ENCODE measurements at regions of chr16 and their contacts with region 1.

Region 1: GRCh38 chr16:12067714-12068401 is 91.3 kb downstream of the SNX29 start:
- DNase-seq: peak; percentile 80
- H3K4me3 Mint-ChIP-seq: no peak overlapping the region
- H3K27ac Mint-ChIP-seq: no peak overlapping the region
- H3K4me1 Mint-ChIP-seq: peaks cover 1% of the 10 kb centered on the region
- H3K27me3 Mint-ChIP-seq: no peaks in the 10 kb centered on the region
- CTCF ChIP-seq: peak; percentile 90

Region 2: DNA sequence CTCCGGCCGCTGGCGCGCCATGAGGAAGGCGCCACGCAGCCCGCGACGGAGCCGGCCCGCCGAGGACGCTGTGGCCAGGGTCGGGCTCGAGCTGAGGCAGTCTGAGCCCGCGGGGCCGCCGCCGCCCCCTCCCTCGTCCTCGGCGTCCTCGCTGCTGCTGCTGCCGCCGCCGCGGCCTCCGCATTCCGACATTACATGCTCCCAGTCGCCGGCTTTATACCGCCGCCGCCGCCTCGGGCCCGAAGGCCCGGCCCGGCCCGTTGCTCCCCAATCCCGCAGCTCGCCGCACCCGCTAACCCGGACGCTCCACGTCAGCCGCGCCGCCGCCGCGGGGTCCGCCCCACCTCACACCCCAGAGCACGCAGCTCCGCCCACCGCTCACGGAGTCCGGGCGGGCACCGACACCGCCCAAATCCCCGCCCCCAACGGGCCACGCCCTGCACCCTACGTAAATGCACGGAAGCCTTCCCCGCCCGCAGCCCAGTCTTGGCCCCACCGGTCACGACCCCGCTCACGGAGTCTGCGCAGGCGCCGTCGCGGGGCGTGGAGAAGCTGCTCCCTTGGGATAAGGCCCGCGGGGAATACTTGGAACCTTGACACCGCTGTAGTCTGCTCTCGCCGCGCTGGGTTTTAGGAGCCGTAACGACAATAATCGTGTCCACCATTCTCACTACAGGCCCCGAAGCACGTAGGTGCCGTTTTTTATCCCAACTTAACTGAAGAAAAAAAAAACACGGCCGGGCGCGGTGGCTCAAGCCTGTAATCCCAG is 325.1 kb before region 1 on chr16 and contains the start of gene TXNDC11:
- CTCF ChIA-PET with region 1: interaction called, 4 read pairs
- POLR2A ChIA-PET with region 1: interaction called, 5 read pairs
- intact Hi-C with region 1: loop called (anchors 5 kb)
- DNase-seq: peak; percentile 97
- H3K4me3 Mint-ChIP-seq: peak within 1 kb of the TSS; percentile 86
- H3K27ac Mint-ChIP-seq: peak within 1 kb of the TSS; percentile 94
- H3K4me1 Mint-ChIP-seq: peaks cover 31% of the 10 kb centered on the region
- H3K27me3 Mint-ChIP-seq: no peaks in the 10 kb centered on the region
- CTCF ChIP-seq: no peak
- total RNA-seq, gene TXNDC11: 38.2 and 43.7 TPM in 2 replicates

Region 3: DNA sequence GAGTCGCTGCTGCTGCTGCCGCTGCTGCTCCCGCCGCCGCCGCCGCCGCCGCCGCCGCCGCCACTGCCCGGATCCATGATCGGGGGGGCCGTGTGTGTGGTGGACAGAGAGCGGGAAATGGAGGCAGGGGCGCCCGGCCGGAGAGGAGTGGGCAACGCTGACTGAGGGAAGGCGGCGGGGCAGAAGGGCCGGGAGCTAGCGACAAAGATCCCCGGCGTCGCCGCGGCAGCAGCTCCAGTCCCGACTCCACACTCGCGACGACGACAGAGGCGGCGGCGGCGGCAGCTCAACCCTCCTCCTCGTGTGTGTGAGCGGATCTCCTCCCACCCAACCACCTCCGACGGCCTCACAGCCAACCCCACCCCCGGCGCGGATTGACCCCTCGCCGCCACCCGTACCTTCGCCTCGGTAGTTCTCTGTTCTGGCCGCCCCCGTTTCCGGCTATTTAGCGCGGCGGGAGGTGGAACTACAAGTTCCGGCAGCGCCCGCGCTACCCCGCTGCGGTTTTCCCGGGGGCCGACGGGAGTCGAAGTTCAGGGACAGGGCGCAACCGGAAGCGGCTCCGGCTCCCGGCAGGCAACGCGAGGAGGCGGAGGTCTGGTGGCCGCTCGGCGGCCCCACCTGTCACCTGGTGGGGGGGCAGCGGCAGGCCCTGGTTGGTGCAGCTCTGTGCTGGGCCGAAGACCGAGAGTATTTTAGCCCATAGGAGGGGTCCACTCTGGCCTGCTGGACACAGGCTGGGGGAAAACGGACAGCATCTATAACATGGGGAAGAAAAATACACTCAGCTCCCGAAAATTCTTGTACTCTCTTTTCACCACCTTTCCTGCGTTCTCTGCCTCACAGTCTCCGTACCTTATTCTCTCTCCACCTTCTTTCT is 152.0 kb before region 1 on chr16 and contains the start of gene GSPT1:
- CTCF ChIA-PET with region 1: interaction called, 4 read pairs
- POLR2A ChIA-PET with region 1: interaction called, 43 read pairs
- intact Hi-C with region 1: loop called (anchors 5 kb)
- DNase-seq: peak; percentile 98
- H3K4me3 Mint-ChIP-seq: peak within 1 kb of the TSS; percentile 88
- H3K27ac Mint-ChIP-seq: peak within 1 kb of the TSS; percentile 71
- H3K4me1 Mint-ChIP-seq: peaks cover 15% of the 10 kb centered on the region
- H3K27me3 Mint-ChIP-seq: no peaks in the 10 kb centered on the region
- CTCF ChIP-seq: no peak
- total RNA-seq, gene GSPT1: 163 and 199 TPM in 2 replicates

Region 4: GRCh38 chr16:11957591-11958395 is 110.1 kb before region 1 on chr16:
- CTCF ChIA-PET with region 1: interaction called, 12 read pairs
- POLR2A ChIA-PET with region 1: no interaction called
- intact Hi-C with region 1: no loop called
- DNase-seq: no peak
- H3K4me3 Mint-ChIP-seq: no peak overlapping the region
- H3K27ac Mint-ChIP-seq: no peak overlapping the region
- H3K4me1 Mint-ChIP-seq: peaks cover 6% of the 10 kb centered on the region
- H3K27me3 Mint-ChIP-seq: no peaks in the 10 kb centered on the region
- CTCF ChIP-seq: no peak

Region 5: DNA sequence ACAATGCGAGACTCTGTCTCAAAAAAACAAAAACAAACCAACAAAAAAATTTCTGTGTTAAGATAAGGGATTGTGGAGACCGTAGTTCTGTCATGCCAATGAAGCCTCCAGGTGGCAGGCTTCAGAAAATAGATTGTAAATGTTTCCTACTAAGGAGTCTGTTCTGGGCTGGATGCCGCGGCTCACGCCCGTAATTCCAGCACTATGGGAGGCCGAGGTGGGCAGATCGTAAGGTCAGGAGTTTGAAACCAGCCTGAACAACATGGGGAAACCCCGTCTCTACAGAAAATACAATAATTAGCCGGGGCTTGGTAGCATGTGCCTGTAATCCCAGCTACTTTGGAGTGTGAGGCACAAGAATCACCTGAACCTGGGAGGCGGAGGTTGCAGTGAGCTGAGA is 95.7 kb before region 1 on chr16:
- CTCF ChIA-PET with region 1: interaction called, 44 read pairs
- POLR2A ChIA-PET with region 1: interaction called, 41 read pairs
- intact Hi-C with region 1: loop called (anchors 1 kb)
- DNase-seq: peak; percentile 9
- H3K4me3 Mint-ChIP-seq: no peak overlapping the region
- H3K27ac Mint-ChIP-seq: no peak overlapping the region
- H3K4me1 Mint-ChIP-seq: peaks cover 15% of the 10 kb centered on the region
- H3K27me3 Mint-ChIP-seq: no peaks in the 10 kb centered on the region
- CTCF ChIP-seq: no peak

Region 6: GRCh38 chr16:12079412-12079965 is 11.6 kb after region 1 on chr16:
- CTCF ChIA-PET with region 1: interaction called, 15 read pairs
- POLR2A ChIA-PET with region 1: no interaction called
- intact Hi-C with region 1: no loop called
- DNase-seq: no peak
- H3K4me3 Mint-ChIP-seq: no peak overlapping the region
- H3K27ac Mint-ChIP-seq: no peak overlapping the region
- H3K4me1 Mint-ChIP-seq: no peaks in the 10 kb centered on the region
- H3K27me3 Mint-ChIP-seq: no peaks in the 10 kb centered on the region
- CTCF ChIP-seq: no peak

Region 7: DNA sequence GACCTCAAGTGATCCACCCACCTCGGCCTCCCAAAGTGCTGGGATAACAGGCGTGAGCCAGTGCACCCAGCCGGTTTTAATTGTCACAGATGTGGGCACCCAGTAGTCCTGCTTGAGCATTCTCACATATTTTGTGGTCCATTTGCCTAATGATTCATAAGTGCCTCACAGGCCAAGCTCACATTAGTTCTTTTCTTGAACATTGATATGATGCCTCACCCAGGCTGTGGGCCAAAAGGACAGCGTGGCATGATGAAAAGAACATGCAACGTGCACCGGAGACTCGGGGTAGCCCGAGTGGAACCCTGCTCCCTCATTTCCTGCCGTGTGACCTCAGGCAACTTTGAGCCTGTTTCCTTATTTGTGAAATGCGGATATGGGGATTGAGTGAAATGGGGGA is 90.6 kb after region 1 on chr16:
- CTCF ChIA-PET with region 1: no interaction called
- POLR2A ChIA-PET with region 1: no interaction called
- intact Hi-C with region 1: no loop called
- DNase-seq: peak; percentile 31
- H3K4me3 Mint-ChIP-seq: no peak overlapping the region
- H3K27ac Mint-ChIP-seq: peak overlapping the region; percentile 70
- H3K4me1 Mint-ChIP-seq: no peaks in the 10 kb centered on the region
- H3K27me3 Mint-ChIP-seq: no peaks in the 10 kb centered on the region
- CTCF ChIP-seq: no peak